Calu3 (cell line): ENCODE measurements at regions of chr20 and their contacts with region 1.

Region 1: DNA sequence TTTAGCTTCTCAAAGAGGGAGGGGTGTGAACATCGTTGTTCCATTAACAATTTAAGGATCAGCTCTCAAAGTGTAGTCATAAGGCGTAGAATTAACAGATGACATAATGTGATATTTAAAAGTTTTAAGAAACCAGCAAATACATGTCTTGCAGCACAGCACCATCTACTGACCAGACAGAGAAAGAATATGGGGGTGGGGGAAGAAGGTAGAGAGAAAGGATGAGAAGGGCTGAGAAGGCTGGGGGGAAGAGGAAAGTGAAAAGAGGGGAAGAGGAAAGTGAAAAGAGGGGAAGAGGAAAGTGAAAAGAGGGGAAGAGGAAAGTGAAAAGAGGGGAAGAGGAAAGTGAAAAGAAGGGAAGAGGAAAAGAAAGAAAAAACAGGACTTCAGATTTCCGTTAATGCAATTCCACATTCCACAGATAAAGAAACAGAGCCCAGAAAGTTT is 80.9 kb downstream of the HAO1 start:
- DNase-seq: peak; percentile 23
- H3K4me3 Mint-ChIP-seq: no peak overlapping the region
- H3K27ac Mint-ChIP-seq: no peak overlapping the region
- H3K4me1 Mint-ChIP-seq: peaks cover 16% of the 10 kb centered on the region
- H3K27me3 Mint-ChIP-seq: peaks cover 13% of the 10 kb centered on the region
- CTCF ChIP-seq: no peak

Region 2: GRCh38 chr20:6142348-6142993 is 1716.9 kb before region 1 on chr20:
- CTCF ChIA-PET with region 1: no interaction called
- intact Hi-C with region 1: loop called (anchors 5 kb)
- DNase-seq: peak; percentile 40
- H3K4me3 Mint-ChIP-seq: no peak overlapping the region
- H3K27ac Mint-ChIP-seq: no peak overlapping the region
- H3K4me1 Mint-ChIP-seq: no peaks in the 10 kb centered on the region
- H3K27me3 Mint-ChIP-seq: peaks cover 12% of the 10 kb centered on the region
- CTCF ChIP-seq: peak; percentile 56

Region 3: DNA sequence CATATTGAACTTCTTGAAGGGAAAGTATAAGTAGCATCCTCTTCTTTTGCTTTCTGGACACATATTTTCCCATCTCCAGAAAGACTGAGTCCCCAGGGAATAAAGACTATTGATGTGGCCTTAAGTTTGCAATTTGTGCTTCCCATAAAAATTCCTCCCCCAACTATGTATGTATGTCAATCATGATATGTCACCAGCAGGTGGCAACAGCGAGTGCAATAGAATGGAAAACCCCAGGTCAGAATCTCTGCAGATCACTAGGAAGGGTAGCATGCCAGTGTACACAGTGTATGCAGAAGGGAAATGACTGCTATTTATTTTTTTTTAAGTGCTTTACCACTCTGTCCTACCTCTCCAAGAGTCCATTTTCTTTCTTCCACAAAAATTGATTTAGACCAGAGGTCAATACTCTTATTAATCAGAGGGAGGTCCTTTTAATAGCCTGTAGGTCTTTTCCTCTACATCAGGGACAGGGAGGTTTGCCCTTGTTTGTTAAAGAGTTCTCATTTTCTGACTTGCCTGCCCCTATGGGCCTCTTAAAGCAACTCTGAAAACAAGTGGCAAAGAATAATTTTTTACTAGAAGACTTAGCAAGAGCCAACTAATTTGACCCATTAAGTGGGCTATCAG is 1030.5 kb before region 1 on chr20:
- CTCF ChIA-PET with region 1: no interaction called
- intact Hi-C with region 1: loop called (anchors 2 kb)
- DNase-seq: peak; percentile 49
- H3K4me3 Mint-ChIP-seq: no peak overlapping the region
- H3K27ac Mint-ChIP-seq: no peak overlapping the region
- H3K4me1 Mint-ChIP-seq: no peaks in the 10 kb centered on the region
- H3K27me3 Mint-ChIP-seq: no peaks in the 10 kb centered on the region
- CTCF ChIP-seq: peak; percentile 52

Region 4: DNA sequence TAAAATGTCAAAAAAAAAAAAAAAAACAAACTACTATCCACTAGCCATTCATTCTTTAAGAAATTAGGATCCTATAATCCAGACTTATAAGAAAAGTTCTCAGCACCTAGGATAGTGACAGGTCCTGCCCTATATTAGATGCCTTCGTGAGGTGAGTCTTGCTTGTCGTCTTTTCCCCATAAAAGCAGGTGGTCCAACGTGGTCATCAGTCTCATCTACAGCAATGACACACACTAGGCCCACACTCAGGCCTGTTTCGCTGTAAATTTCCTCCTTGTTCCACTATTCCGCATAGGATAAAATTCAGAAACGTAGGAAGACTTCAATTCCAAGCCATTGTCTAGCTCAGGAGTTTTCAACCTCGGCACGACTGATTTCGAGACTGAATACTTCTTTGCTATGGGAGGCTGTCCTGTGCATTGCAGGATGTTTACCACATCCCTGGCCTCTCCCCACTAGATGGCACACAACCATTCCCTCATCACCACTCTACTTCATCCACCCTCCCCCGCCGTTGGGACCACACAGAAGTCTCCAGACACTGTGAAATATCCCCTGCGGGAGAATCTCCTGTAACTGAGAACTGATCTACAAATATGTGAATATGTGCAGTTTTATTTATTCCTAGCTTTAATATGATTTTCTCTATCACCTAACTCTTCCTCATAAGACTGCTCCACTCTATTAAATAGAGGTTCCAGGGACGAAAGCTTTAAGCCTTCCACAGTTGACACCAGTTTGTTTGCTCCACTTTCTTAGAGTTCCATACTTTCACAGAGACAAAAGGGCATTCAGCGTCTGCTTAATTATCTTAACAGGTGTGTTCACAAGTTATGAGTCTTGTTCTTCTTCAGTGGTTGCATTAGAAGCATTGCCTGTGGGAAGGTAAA is 745.6 kb before region 1 on chr20:
- CTCF ChIA-PET with region 1: no interaction called
- intact Hi-C with region 1: loop called (anchors 5 kb)
- DNase-seq: peak; percentile 57
- H3K4me3 Mint-ChIP-seq: no peak overlapping the region
- H3K27ac Mint-ChIP-seq: no peak overlapping the region
- H3K4me1 Mint-ChIP-seq: peaks cover 8% of the 10 kb centered on the region
- H3K27me3 Mint-ChIP-seq: no peaks in the 10 kb centered on the region
- CTCF ChIP-seq: peak; percentile 35

Region 5: GRCh38 chr20:7285918-7286556 is 573.3 kb before region 1 on chr20:
- CTCF ChIA-PET with region 1: no interaction called
- intact Hi-C with region 1: loop called (anchors 5 kb)
- DNase-seq: peak; percentile 60
- H3K4me3 Mint-ChIP-seq: no peak overlapping the region
- H3K27ac Mint-ChIP-seq: no peak overlapping the region
- H3K4me1 Mint-ChIP-seq: peaks cover under 1% of the 10 kb centered on the region
- H3K27me3 Mint-ChIP-seq: no peaks in the 10 kb centered on the region
- CTCF ChIP-seq: peak; percentile 61

Region 6: GRCh38 chr20:7379621-7380220 is 479.7 kb before region 1 on chr20:
- CTCF ChIA-PET with region 1: no interaction called
- intact Hi-C with region 1: loop called (anchors 10 kb)
- DNase-seq: no peak
- H3K4me3 Mint-ChIP-seq: no peak overlapping the region
- H3K27ac Mint-ChIP-seq: no peak overlapping the region
- H3K4me1 Mint-ChIP-seq: no peaks in the 10 kb centered on the region
- H3K27me3 Mint-ChIP-seq: no peaks in the 10 kb centered on the region
- CTCF ChIP-seq: no peak

Region 7: DNA sequence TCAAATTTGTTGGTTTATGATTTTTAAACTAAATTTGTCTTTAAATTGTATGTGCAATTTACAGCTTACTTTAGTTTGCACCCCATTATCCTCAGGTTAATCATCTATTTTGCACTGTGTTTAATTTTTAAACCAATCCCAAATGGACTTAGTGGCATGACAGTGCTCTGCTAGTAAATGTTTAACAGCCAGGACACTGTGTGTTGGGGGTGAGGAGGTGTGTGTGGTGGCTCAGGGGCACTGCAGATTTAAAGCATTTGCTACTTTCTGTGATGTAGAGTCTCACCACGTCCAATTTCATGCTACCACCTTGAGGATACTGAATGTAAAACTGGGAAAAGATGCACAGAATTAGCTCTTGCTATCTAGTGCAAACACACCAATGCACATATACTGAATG is 144.8 kb before region 1 on chr20:
- CTCF ChIA-PET with region 1: no interaction called
- intact Hi-C with region 1: loop called (anchors 10 kb)
- DNase-seq: peak; percentile 4
- H3K4me3 Mint-ChIP-seq: no peak overlapping the region
- H3K27ac Mint-ChIP-seq: no peak overlapping the region
- H3K4me1 Mint-ChIP-seq: no peaks in the 10 kb centered on the region
- H3K27me3 Mint-ChIP-seq: no peaks in the 10 kb centered on the region
- CTCF ChIP-seq: no peak